Endothelial cell of umbilical vein (primary cell): ENCODE measurements at regions of chr5 and their contacts with region 1.

Region 1: GRCh38 chr5:172860520-172861443 is 26.7 kb downstream of the ERGIC1 start:
- DNase-seq: peak; percentile 90
- H3K4me3 ChIP-seq: no peak overlapping the region
- H3K27ac ChIP-seq: peak overlapping the region; percentile 90
- H3K4me1 ChIP-seq: peaks cover 53% of the 10 kb centered on the region
- H3K27me3 ChIP-seq: no peaks in the 10 kb centered on the region
- CTCF ChIP-seq: no peak
- POLR2A ChIP-seq: peak; percentile 53

Region 2: GRCh38 chr5:172764849-172765765 is 95.7 kb before region 1 on chr5:
- CTCF ChIA-PET with region 1: interaction called, 37 read pairs
- POLR2A ChIA-PET with region 1: interaction called, 60 read pairs
- dilution Hi-C with region 1: no loop called
- intact Hi-C with region 1: loop called (anchors 1 kb)
- DNase-seq: peak; percentile 99
- H3K4me3 ChIP-seq: peak overlapping the region in 2 of 3 experiments; percentile 16 to 28
- H3K27ac ChIP-seq: peak overlapping the region; percentile 92
- H3K4me1 ChIP-seq: peaks cover 44% of the 10 kb centered on the region
- H3K27me3 ChIP-seq: no peaks in the 10 kb centered on the region
- CTCF ChIP-seq: no peak
- POLR2A ChIP-seq: peak; percentile 16

Region 3: DNA sequence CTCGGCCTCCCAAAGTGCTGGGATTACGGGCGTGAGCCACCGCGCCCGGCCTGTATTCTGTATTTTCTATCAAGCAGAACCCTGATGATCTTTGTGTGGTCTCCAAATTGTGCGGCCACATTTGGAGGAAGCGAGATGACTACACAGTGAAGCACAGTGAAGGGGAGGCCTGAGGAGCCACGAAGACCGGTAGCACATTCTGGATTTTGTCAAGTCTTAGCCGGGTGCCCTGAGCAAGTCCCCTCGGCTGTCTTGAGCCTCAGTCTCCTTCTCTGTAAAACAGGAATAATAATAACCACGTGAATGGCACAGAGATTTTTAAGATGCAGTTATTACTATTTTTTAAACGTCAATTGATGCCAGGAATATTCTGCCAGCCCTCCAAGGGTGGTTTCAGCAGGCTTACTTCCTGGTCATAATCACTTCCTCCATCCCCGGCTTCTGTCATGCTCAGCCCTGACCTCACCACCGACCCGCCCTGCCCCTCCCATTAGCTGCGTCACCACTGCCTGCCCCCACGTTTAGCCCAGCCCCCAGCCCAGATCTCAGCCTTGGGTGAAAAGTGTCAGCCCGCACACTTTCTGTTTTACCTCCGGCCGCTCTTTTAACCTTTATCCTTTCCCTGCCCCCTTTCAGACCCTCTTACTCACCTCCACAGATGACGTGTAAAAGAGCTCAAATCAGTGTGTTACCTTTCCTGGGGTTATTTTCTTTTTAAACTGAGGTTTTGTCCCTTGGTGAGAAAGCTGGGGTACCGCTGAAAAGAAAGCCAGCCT is 53.7 kb before region 1 on chr5:
- CTCF ChIA-PET with region 1: interaction called, 4 read pairs
- POLR2A ChIA-PET with region 1: no interaction called
- dilution Hi-C with region 1: no loop called
- intact Hi-C with region 1: loop called (anchors 1 kb)
- DNase-seq: peak; percentile 86
- H3K4me3 ChIP-seq: peak overlapping the region in 1 of 3 experiments; percentile 41
- H3K27ac ChIP-seq: peak overlapping the region; percentile 95
- H3K4me1 ChIP-seq: peaks cover 15% of the 10 kb centered on the region
- H3K27me3 ChIP-seq: no peaks in the 10 kb centered on the region
- CTCF ChIP-seq: no peak
- POLR2A ChIP-seq: peak; percentile 68

Region 4: GRCh38 chr5:172846249-172846648 is 14.5 kb before region 1 on chr5:
- CTCF ChIA-PET with region 1: interaction called, 7 read pairs
- POLR2A ChIA-PET with region 1: interaction called, 5 read pairs
- dilution Hi-C with region 1: no loop called
- intact Hi-C with region 1: loop called (anchors 1 kb)
- DNase-seq: no peak
- H3K4me3 ChIP-seq: no peak overlapping the region
- H3K27ac ChIP-seq: no peak overlapping the region
- H3K4me1 ChIP-seq: peaks cover 8% of the 10 kb centered on the region
- H3K27me3 ChIP-seq: no peaks in the 10 kb centered on the region
- CTCF ChIP-seq: no peak
- POLR2A ChIP-seq: no peak

Region 5: DNA sequence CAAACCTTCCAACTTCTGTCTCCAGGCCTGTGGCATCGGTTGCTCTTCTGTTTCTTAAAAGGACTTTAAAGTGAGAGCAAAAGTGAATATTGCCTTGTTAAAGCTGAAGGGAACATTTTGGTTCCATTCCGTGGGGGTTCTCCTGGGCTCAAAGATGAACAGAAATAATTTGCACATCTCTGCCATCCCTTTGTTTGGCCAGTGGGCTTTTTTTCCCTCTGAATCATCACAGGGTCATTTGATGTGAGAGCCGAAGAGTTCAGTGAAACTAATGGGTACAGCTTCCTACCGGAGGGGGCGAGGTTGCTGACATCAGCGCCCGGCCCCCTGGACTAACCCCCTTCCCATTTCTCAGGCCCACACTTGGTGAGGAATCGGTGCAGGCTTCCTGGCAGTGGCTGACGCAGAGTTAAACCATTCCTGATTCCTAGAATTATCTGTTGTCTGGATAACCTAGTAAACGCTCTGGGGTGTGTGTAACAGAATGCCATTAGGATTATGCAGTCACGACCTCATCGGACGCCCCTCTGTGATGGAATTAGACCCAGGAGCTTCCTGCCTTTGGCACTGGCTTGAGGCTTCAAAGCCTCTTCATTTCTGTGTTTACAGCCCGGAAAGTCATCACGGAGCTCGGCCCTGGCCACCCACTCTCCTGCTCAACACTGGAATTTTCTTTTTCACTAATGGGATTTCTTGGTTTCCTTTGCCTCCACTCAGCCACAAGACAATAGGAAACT is 36.9 kb after region 1 on chr5:
- CTCF ChIA-PET with region 1: interaction called, 15 read pairs
- POLR2A ChIA-PET with region 1: no interaction called
- dilution Hi-C with region 1: no loop called
- intact Hi-C with region 1: loop called (anchors 1 kb)
- DNase-seq: peak; percentile 91
- H3K4me3 ChIP-seq: no peak overlapping the region
- H3K27ac ChIP-seq: peak overlapping the region; percentile 87
- H3K4me1 ChIP-seq: peaks cover 41% of the 10 kb centered on the region
- H3K27me3 ChIP-seq: no peaks in the 10 kb centered on the region
- CTCF ChIP-seq: no peak
- POLR2A ChIP-seq: peak; percentile 52

Region 6: GRCh38 chr5:172910828-172911627 is 50.2 kb after region 1 on chr5:
- CTCF ChIA-PET with region 1: interaction called, 4 read pairs
- POLR2A ChIA-PET with region 1: no interaction called
- dilution Hi-C with region 1: no loop called
- intact Hi-C with region 1: loop called (anchors 1 kb)
- DNase-seq: peak; percentile 90
- H3K4me3 ChIP-seq: no peak overlapping the region
- H3K27ac ChIP-seq: peak overlapping the region; percentile 89
- H3K4me1 ChIP-seq: peaks cover 15% of the 10 kb centered on the region
- H3K27me3 ChIP-seq: no peaks in the 10 kb centered on the region
- CTCF ChIP-seq: peak; percentile 60 to 75
- POLR2A ChIP-seq: peak; percentile 42